CD4-positive, alpha-beta memory T cell (primary cell): ENCODE measurements at regions of chr17 and their contacts with region 1.

Region 1: GRCh38 chr17:61904094-61904710 is 23.6 kb downstream of the INTS2 start:
- DNase-seq: peak; percentile 46 to 53 (median 52)
- H3K4me3 ChIP-seq: no peak overlapping the region
- H3K4me3 Mint-ChIP-seq: peak overlapping the region; percentile 50 to 76 (median 70)
- H3K27ac ChIP-seq: peak overlapping the region; percentile 55
- H3K27ac Mint-ChIP-seq: peak overlapping the region; percentile 65 to 95 (median 92)
- H3K4me1 ChIP-seq: peaks cover 4% of the 10 kb centered on the region
- H3K4me1 Mint-ChIP-seq: peaks cover 0 to 14% (median 3%) of the 10 kb centered on the region in 4 donors
- H3K27me3 ChIP-seq: no peaks in the 10 kb centered on the region
- H3K27me3 Mint-ChIP-seq: no peaks in the 10 kb centered on the region

Region 2: DNA sequence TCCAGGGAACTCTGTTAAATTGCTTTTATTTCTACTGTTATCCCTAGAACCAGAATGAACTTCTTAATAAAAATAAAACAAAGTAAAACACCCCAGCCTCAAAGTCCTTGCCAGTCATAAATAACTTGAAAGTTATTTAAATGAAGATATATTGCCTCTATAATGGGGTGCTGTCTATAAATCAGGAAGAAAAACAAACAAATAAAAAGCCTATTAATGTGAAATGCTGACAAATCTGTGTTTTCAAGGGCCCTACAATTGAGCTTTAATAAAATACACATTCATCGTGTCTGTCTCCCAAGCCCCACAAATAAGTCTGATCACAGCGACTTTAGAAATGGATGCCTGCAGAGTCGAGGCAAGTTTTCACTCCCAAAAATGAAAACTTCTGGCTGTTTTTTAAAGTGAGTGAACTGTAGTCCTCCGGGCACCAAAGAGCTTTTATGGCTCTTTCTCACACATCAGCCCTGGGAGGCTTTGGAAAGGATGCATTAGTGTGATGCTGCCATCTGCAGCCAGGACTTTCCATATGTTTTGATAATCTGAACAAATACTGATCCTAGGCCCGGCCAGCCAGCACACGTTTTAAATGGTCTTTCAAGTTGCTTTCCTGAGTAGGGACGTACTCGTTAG is 329.5 kb before region 1 on chr17:
- CTCF ChIA-PET with region 1: no interaction called
- POLR2A ChIA-PET with region 1: no interaction called
- intact Hi-C with region 1: no loop called
- DNase-seq: no peak
- H3K4me3 ChIP-seq: no peak overlapping the region
- H3K4me3 Mint-ChIP-seq: no peak overlapping the region
- H3K27ac ChIP-seq: no peak overlapping the region
- H3K27ac Mint-ChIP-seq: no peak overlapping the region
- H3K4me1 ChIP-seq: no peaks in the 10 kb centered on the region
- H3K4me1 Mint-ChIP-seq: no peaks in the 10 kb centered on the region
- H3K27me3 ChIP-seq: no peaks in the 10 kb centered on the region
- H3K27me3 Mint-ChIP-seq: peaks cover 3 to 11% of the 10 kb centered on the region in 2 donors

Region 3: GRCh38 chr17:61809816-61810392 is 94.3 kb before region 1 on chr17:
- CTCF ChIA-PET with region 1: no interaction called
- POLR2A ChIA-PET with region 1: no interaction called
- intact Hi-C with region 1: no loop called
- DNase-seq: no peak
- H3K4me3 ChIP-seq: no peak overlapping the region
- H3K4me3 Mint-ChIP-seq: no peak overlapping the region
- H3K27ac ChIP-seq: no peak overlapping the region
- H3K27ac Mint-ChIP-seq: no peak overlapping the region
- H3K4me1 ChIP-seq: peaks cover 10% of the 10 kb centered on the region
- H3K4me1 Mint-ChIP-seq: peaks cover 5 to 11% (median 7%) of the 10 kb centered on the region in 4 donors
- H3K27me3 ChIP-seq: no peaks in the 10 kb centered on the region
- H3K27me3 Mint-ChIP-seq: no peaks in the 10 kb centered on the region

Region 4: GRCh38 chr17:61862975-61863800 is 41.0 kb before region 1 on chr17 and contains the start of gene BRIP1:
- CTCF ChIA-PET with region 1: no interaction called
- POLR2A ChIA-PET with region 1: interaction called, 15 read pairs
- intact Hi-C with region 1: no loop called
- DNase-seq: peak; percentile 86 to 94 (median 86)
- H3K4me3 ChIP-seq: peak within 1 kb of the TSS; percentile 84 to 96
- H3K4me3 Mint-ChIP-seq: peak within 1 kb of the TSS; percentile 95 to 99 (median 97)
- H3K27ac ChIP-seq: peak within 1 kb of the TSS; percentile 66
- H3K27ac Mint-ChIP-seq: peak within 1 kb of the TSS; percentile 90 to 98 (median 95)
- H3K4me1 ChIP-seq: peaks cover 27% of the 10 kb centered on the region
- H3K4me1 Mint-ChIP-seq: peaks cover 22 to 33% (median 27%) of the 10 kb centered on the region in 4 donors
- H3K27me3 ChIP-seq: no peaks in the 10 kb centered on the region
- H3K27me3 Mint-ChIP-seq: no peaks in the 10 kb centered on the region
- total RNA-seq, gene BRIP1: 1.5 to 1.7 TPM

Region 5: GRCh38 chr17:61878984-61879612 is 25.1 kb before region 1 on chr17:
- CTCF ChIA-PET with region 1: no interaction called
- POLR2A ChIA-PET with region 1: no interaction called
- intact Hi-C with region 1: no loop called
- DNase-seq: no peak
- H3K4me3 ChIP-seq: no peak overlapping the region
- H3K4me3 Mint-ChIP-seq: no peak overlapping the region
- H3K27ac ChIP-seq: no peak overlapping the region
- H3K27ac Mint-ChIP-seq: no peak overlapping the region
- H3K4me1 ChIP-seq: no peaks in the 10 kb centered on the region
- H3K4me1 Mint-ChIP-seq: peaks cover 0 to 3% (median 2%) of the 10 kb centered on the region in 4 donors
- H3K27me3 ChIP-seq: no peaks in the 10 kb centered on the region
- H3K27me3 Mint-ChIP-seq: no peaks in the 10 kb centered on the region